Dendritic cell treated with granulocyte-macrophage colony-stimulating factor and Interleukin-4, amounts not matched to agents 40 ng/mL and 50 ng/mL, for 4 days (primary cell): ENCODE measurements at regions of chr15 and their contacts with region 1.

Region 1: DNA sequence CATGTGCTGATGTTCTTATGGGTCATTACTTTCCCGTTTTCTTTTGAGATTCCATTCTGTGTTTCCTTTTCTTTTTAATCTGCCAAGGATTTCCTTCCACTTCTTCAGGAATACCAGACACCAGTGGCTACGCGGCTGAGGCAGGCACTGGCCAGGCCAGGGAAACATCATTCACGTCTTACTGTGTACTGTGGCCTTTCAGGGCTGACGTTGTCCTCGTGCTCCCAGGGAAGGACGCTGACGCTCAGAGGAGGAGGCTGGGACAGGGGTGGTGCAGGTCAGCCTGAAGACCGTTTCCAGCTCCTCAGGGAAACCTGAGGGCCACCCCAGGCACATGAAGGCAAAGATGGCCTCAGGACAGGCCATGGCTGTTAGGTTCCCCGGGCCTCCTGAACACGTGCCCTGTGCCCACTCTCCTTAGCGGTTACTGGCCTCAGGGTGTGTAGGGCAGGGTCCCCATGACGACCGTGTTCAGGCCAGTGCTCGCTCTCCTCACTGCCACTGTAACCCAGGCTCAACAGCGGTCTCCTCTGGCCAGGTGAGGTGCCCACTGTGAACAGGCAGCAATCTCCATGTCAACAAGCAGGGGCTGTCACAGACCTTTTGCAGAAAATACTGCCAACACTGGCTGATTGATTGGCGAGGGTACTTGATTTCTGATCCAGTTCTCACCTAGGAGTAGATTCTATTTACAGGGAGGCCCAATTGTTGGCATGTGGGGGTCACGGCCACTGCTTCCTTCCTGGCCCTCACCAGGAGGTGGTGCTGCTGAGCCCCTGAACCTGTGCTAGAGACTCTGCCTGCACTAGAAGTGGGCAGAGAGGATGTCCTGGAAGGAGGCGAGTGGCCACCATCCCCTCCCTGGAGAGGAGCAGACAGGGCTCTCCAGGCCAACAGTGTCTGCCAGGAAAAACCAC is 169.5 kb downstream of the ATP10A start:
- H3K4me3 Mint-ChIP-seq: no peak overlapping the region
- H3K27ac Mint-ChIP-seq: no peak overlapping the region
- H3K4me1 Mint-ChIP-seq: no peaks in the 10 kb centered on the region
- H3K27me3 Mint-ChIP-seq: no peaks in the 10 kb centered on the region

Region 2: DNA sequence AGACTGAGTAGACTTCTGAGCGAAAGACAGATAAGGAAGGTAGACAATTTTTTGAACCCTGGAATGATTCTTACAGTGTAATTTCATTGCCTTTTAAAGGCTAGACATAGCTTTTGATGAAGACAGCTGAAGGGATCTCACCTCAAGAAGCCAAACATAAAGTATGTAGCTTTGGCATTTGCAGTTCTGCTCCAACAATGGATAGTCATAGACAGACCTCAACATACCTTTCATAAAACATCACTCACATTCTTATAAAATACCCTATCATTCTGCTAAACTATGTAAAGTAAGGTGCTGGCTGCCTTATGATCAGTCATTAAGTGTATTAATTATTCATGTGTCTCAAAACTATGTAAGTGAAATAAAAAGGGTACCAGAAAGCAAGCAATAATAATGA is 324.7 kb before region 1 on chr15:
- intact Hi-C with region 1: no loop called
- H3K4me3 Mint-ChIP-seq: no peak overlapping the region
- H3K27ac Mint-ChIP-seq: no peak overlapping the region
- H3K4me1 Mint-ChIP-seq: peaks cover 25% of the 10 kb centered on the region
- H3K27me3 Mint-ChIP-seq: no peaks in the 10 kb centered on the region

Region 3: GRCh38 chr15:25727867-25728600 is 34.5 kb after region 1 on chr15:
- intact Hi-C with region 1: no loop called
- H3K4me3 Mint-ChIP-seq: no peak overlapping the region
- H3K27ac Mint-ChIP-seq: no peak overlapping the region
- H3K4me1 Mint-ChIP-seq: peaks cover 3% of the 10 kb centered on the region
- H3K27me3 Mint-ChIP-seq: no peaks in the 10 kb centered on the region

Region 4: DNA sequence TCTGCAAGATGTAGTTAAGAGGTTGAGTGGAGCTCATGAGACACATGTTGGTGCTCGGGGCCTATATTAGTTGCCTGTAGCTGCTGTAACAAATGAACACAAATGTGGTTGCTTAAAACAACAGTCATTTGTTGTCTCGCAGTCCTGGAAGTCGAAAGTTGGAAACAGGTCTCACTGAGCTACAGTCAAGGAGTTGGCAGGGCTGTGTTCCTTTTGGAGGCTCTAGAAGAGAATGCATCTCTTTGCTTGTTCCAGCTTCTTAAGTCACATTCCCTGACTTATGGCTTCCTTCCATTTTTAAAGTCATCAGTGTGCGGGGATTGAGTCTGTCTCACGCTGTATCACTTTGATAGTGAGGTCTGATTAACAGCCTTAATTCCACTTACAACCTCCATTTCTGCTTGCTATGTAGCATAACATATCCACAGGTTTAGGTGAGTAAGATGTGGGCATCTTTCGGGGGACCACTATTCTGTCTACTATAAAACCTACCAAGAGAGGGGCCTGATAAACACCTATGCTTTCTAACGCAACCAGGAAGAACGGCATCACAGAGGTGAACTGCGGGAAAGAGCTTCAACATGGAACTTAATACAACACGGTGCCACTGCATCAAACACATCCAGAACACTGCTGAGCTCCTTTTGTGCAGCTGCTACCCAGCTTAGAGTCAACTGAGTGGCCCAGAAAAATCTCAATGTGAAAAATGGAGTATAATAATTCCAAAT is 50.1 kb after region 1 on chr15:
- intact Hi-C with region 1: no loop called
- H3K4me3 Mint-ChIP-seq: no peak overlapping the region
- H3K27ac Mint-ChIP-seq: no peak overlapping the region
- H3K4me1 Mint-ChIP-seq: peaks cover 29% of the 10 kb centered on the region
- H3K27me3 Mint-ChIP-seq: peaks cover 24% of the 10 kb centered on the region

Region 5: GRCh38 chr15:25933456-25934158 is 240.0 kb after region 1 on chr15:
- intact Hi-C with region 1: loop called (anchors 1 kb)
- H3K4me3 Mint-ChIP-seq: peak overlapping the region; percentile 77
- H3K27ac Mint-ChIP-seq: peak overlapping the region; percentile 65
- H3K4me1 Mint-ChIP-seq: peaks cover 18% of the 10 kb centered on the region
- H3K27me3 Mint-ChIP-seq: peaks cover 30% of the 10 kb centered on the region

Region 6: DNA sequence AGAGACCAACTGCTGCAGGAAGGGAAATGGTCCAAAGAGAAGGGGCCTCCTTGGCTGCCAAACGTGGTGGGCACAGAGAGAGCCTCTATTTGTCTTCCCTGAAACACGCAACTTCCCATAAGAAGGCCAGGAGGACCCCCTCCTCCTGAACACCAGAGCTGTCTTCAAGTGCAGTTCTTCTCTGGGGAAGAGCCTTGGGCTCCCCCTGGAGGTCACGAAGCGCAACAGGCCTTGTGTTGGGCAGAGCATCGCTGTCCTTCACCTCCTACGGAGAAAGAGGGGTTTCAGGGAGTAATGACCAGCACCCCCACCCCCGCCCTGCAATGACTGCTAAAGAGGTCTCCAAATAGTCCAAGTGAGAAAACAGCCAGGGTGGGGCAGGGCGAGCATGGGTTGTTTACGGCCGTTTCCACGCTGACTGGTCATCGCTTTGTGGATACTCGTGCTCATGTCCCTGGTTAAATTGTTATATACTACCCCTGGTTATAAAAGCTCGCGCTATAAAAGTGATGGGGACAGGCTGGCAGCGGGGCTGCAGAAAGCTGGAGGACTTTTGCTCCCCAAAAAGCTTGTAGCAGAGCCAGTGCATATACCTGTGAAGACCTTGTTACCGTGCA is 567.0 kb after region 1 on chr15:
- intact Hi-C with region 1: loop called (anchors 5 kb)
- H3K4me3 Mint-ChIP-seq: no peak overlapping the region
- H3K27ac Mint-ChIP-seq: no peak overlapping the region
- H3K4me1 Mint-ChIP-seq: no peaks in the 10 kb centered on the region
- H3K27me3 Mint-ChIP-seq: no peaks in the 10 kb centered on the region